ENCODE measurements at regions of chr6 and their contacts with region 1.

Region 1: GRCh38 chr6:34610819-34611477 is 54.8 kb upstream of the SPDEF start:
- DNase-seq: peak; percentile 95
- ATAC-seq: peak; percentile 81
- H3K4me3 ChIP-seq: no peak overlapping the region
- H3K27ac ChIP-seq: no peak overlapping the region
- H3K4me1 ChIP-seq: peaks cover 2% of the 10 kb centered on the region; the same call in 1 of the 2 replicates
- H3K27me3 ChIP-seq: no peaks in the 10 kb centered on the region
- CTCF ChIP-seq: no peak
- POLR2A ChIP-seq: no peak
- RAD21 ChIP-seq: no peak

Region 2: DNA sequence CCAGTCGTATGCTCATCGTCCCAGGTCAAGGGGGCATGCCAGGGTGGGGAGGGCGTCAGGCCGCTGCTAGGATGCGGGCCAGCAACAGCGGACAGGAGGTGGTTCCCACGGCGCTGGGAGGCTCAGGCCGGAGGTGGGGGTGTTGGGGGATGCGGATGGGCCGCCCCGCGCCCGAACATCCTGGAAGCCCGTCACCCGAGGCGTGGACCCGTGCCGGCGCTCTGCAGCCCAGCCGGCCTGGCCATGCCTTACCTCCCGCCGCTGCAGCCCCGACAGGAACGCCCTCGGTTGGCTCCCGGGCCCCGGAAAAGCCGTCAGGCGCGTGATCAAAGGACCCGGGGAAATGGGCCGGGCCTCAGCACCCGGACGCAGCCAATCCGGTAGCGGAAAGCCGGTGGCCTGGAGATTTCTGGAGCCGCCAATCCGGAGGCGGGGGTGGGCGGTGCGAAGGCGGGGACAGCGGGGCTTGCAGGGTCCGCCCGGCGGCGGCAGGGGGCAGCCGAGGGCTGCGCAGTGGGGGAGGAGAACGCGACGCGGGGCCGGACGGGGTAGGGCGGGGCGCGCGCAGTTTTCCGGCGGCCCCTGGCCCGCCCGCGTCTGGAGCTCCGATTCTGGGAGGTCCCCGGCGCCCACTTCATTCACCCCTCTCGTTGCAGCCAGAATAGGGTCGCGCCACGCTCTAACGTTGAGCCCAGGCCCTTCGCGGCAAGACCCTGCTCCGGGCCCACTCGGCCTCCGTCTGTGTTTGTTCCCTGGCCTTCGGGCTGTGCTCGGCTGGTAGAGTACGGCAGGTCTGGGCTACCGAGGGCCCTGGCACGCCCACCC is 362.0 kb before region 1 on chr6 and contains the start of gene SMIM29:
- CTCF ChIA-PET with region 1: interaction called, 3 read pairs
- POLR2A ChIA-PET with region 1: no interaction called
- dilution Hi-C with region 1: no loop called
- in situ Hi-C with region 1: loop called (anchors 10 kb)
- intact Hi-C with region 1: loop called (anchors 1 kb)
- DNase-seq: peak; percentile 91
- ATAC-seq: peak; percentile 85
- H3K4me3 ChIP-seq: peak within 1 kb of the TSS; percentile 65
- H3K27ac ChIP-seq: peak within 1 kb of the TSS; percentile 87
- H3K4me1 ChIP-seq: peaks cover 9% of the 10 kb centered on the region
- H3K27me3 ChIP-seq: no peaks in the 10 kb centered on the region
- CTCF ChIP-seq: peak; percentile 96
- POLR2A ChIP-seq: peak; percentile 74
- RAD21 ChIP-seq: peak; percentile 82
- total RNA-seq, gene SMIM29: 8.1 and 8.4 TPM in 2 replicates

Region 3: GRCh38 chr6:34414999-34415858 is 195.7 kb before region 1 on chr6:
- CTCF ChIA-PET with region 1: interaction called, 8 read pairs
- POLR2A ChIA-PET with region 1: no interaction called
- dilution Hi-C with region 1: no loop called
- in situ Hi-C with region 1: loop called (anchors 10 kb)
- intact Hi-C with region 1: loop called (anchors 5 kb)
- DNase-seq: peak; percentile 65
- ATAC-seq: peak; percentile 50
- H3K4me3 ChIP-seq: no peak overlapping the region
- H3K27ac ChIP-seq: no peak overlapping the region
- H3K4me1 ChIP-seq: no peaks in the 10 kb centered on the region
- H3K27me3 ChIP-seq: no peaks in the 10 kb centered on the region
- CTCF ChIP-seq: peak; percentile 63
- POLR2A ChIP-seq: 0 out of 2 replicates have a peak, but pooled peaks have one; percentile 17
- RAD21 ChIP-seq: peak; percentile 65

Region 4: GRCh38 chr6:34526992-34527728 is 83.8 kb before region 1 on chr6:
- CTCF ChIA-PET with region 1: no interaction called
- POLR2A ChIA-PET with region 1: no interaction called
- dilution Hi-C with region 1: no loop called
- in situ Hi-C with region 1: no loop called
- intact Hi-C with region 1: loop called (anchors 1 kb)
- DNase-seq: peak; percentile 83
- ATAC-seq: peak; percentile 98
- H3K4me3 ChIP-seq: peak overlapping the region; percentile 48
- H3K27ac ChIP-seq: no peak overlapping the region
- H3K4me1 ChIP-seq: peaks cover 4% of the 10 kb centered on the region
- H3K27me3 ChIP-seq: peaks cover 11% of the 10 kb centered on the region; the same call in 1 of the 2 replicates
- CTCF ChIP-seq: peak; percentile 68
- POLR2A ChIP-seq: no peak
- RAD21 ChIP-seq: peak; percentile 71

Region 5: DNA sequence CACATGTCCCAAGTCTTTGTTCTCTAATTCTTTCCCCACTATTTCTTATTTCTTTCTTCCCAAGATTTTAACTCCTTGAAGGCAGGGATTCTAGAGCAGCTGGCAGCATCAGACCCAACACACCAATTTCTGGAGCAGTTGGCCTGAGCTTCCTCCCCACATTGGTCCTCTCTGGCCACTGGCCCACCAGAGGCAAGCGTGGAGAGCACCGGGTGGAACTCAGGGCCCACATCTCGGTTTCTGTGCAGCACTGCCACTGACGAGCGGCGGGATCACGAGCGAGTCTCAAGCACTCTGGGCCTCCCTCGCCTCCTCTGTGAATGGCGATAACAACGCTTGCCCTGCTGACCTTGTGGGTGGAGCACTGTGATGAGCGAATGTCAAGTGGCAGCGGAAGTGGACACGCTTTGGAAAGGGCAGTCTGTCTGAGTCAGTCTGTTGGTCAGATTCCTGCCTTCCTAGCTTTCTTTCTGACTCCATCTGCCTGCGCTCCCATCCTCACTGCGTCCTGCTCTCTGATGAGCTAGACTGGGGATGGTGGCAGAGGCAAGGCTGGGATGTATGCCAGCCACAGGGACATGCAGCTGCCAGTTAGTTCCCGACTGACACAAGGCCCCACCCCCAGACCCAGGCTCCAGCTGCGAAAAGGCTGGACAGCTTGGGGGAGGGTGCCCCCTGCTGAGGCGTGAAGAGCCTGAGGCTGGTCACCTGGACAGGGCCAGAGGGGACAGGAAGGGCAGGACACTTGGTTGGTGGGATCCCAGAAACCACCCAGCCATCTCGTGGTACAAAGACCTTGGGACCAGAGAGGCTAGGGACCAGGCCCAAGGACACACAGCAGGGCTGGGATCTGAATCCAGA is 50.4 kb before region 1 on chr6:
- CTCF ChIA-PET with region 1: no interaction called
- POLR2A ChIA-PET with region 1: no interaction called
- dilution Hi-C with region 1: no loop called
- in situ Hi-C with region 1: no loop called
- intact Hi-C with region 1: no loop called
- DNase-seq: peak; percentile 75
- ATAC-seq: peak; percentile 86
- H3K4me3 ChIP-seq: no peak overlapping the region
- H3K27ac ChIP-seq: no peak overlapping the region
- H3K4me1 ChIP-seq: peaks cover 6% of the 10 kb centered on the region
- H3K27me3 ChIP-seq: peaks cover under 1% of the 10 kb centered on the region; the same call in 1 of the 2 replicates
- CTCF ChIP-seq: no peak
- POLR2A ChIP-seq: no peak
- RAD21 ChIP-seq: no peak

Region 6: GRCh38 chr6:35637911-35638310 is 1027.0 kb after region 1 on chr6:
- CTCF ChIA-PET with region 1: no interaction called
- POLR2A ChIA-PET with region 1: interaction called, 13 read pairs
- dilution Hi-C with region 1: no loop called
- in situ Hi-C with region 1: no loop called
- intact Hi-C with region 1: no loop called
- DNase-seq: no peak
- ATAC-seq: no peak
- H3K4me3 ChIP-seq: no peak overlapping the region
- H3K27ac ChIP-seq: no peak overlapping the region
- H3K4me1 ChIP-seq: peaks cover 9% of the 10 kb centered on the region
- H3K27me3 ChIP-seq: no peaks in the 10 kb centered on the region
- CTCF ChIP-seq: no peak
- POLR2A ChIP-seq: no peak
- RAD21 ChIP-seq: no peak

Measured in IMR-90 (cell line).